H1 (cell line): ENCODE measurements at regions of chr6 and their contacts with region 1.

Region 1: DNA sequence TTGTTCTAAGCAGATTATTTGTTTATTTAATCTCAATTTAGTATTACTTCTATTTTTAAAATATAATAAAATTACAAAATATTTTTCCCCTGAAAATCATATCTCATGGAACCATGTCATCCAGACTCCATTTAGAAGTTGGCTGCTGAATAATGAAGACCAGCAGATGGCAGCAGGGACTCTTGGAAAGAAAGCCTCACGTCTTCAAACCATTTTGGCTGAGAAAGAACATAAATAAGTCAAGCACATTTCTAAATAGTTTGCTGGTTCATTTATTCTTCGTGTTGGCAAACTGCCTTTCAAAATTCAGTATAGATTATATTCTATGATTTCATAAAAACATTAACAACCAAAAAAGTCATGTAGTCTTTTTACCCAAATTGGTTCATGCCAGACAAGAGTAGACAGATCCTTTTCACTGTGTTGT is 71.7 kb downstream of the RCAN2 start:
- DNase-seq: peak in 1 of 2 experiments; percentile 52
- H3K4me3 ChIP-seq: no peak overlapping the region
- H3K27ac ChIP-seq: no peak overlapping the region
- H3K4me1 ChIP-seq: no peaks in the 10 kb centered on the region
- H3K27me3 ChIP-seq: no peaks in the 10 kb centered on the region
- CTCF ChIP-seq: peak in 2 of 3 experiments; percentile 61 to 81; a peak in 3 of 4 replicates
- EP300 ChIP-seq: no peak
- POLR2A ChIP-seq: no peak
- RAD21 ChIP-seq: peak; percentile 91 to 92

Region 2: DNA sequence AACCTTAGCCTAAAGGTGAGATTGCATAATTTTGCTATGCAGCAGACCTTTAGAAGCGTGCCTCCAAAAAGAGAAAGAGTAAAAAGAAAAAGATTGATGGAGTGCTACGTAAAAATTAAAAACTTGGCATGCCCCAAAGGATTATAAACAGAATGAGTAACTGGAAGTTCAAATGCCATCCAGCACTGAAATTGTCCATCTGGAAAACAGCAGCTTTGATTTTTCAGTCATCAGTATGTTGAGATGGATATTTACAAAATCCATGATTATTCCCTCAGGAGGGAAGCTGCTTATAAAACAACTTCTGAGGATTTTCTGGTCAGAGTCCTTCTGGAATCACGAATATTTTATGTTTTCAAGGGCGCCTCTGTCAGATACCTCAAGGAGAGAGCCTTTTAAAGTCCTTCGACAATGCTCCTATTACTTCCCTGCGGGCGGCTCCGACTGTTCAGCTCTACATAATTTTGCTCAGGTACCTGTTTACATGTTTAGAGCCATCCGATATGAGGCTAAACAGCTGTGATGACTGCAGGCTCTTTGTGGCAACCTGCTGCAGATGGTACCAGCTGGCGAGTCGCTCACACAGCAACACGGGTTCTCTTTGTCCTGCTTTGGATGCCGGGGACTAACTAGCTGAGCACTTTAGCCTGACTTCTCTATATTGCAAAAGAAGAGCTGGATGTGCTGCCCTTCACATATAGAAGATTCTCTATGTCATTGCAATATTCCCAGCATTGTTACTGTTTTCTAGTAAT is 11.6 kb before region 1 on chr6:
- CTCF ChIA-PET with region 1: interaction called, 16 read pairs
- POLR2A ChIA-PET with region 1: no interaction called
- DNase-seq: no peak
- H3K4me3 ChIP-seq: no peak overlapping the region
- H3K27ac ChIP-seq: no peak overlapping the region
- H3K4me1 ChIP-seq: no peaks in the 10 kb centered on the region
- H3K27me3 ChIP-seq: no peaks in the 10 kb centered on the region
- CTCF ChIP-seq: no peak
- EP300 ChIP-seq: no peak
- POLR2A ChIP-seq: no peak
- RAD21 ChIP-seq: no peak

Region 3: DNA sequence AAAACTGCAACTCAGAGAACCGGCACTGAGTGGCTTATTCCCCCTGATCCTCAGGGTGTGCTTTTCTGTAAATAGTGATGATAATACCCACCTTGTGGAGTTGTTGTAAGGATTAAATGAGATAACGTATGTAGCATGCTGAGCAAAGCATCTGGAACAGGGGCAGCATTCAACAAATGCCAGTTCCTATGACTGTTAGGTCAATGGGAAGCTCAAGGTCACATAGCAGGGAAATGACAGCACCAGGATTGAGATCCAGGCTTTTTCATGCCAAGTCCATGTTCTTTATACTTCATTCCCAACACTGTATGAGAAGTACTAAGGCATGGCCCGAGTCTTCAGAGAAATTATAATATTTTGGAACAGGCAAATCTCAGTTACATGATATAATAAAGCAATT is 66.6 kb after region 1 on chr6:
- CTCF ChIA-PET with region 1: interaction called, 12 read pairs
- POLR2A ChIA-PET with region 1: no interaction called
- DNase-seq: no peak
- H3K4me3 ChIP-seq: no peak overlapping the region
- H3K27ac ChIP-seq: no peak overlapping the region
- H3K4me1 ChIP-seq: peaks cover 0 to 6% (median 3%) of the 10 kb centered on the region in 4 experiments; a peak in 4 of 7 replicates
- H3K27me3 ChIP-seq: 0 out of 7 replicates have a peak, but pooled peaks cover 0 to 3% (median 0%) of the 10 kb centered on the region in 4 experiments
- CTCF ChIP-seq: no peak
- EP300 ChIP-seq: no peak
- POLR2A ChIP-seq: no peak
- RAD21 ChIP-seq: no peak

Region 4: GRCh38 chr6:46491628-46492547 is 72.3 kb after region 1 on chr6:
- CTCF ChIA-PET with region 1: interaction called, 12 read pairs
- POLR2A ChIA-PET with region 1: no interaction called
- DNase-seq: peak in 1 of 2 experiments; percentile 74
- H3K4me3 ChIP-seq: peak overlapping the region; percentile 55 to 94 (median 69)
- H3K27ac ChIP-seq: no peak overlapping the region
- H3K4me1 ChIP-seq: peaks cover 2 to 6% (median 5%) of the 10 kb centered on the region in 4 experiments; a peak in 5 of 7 replicates
- H3K27me3 ChIP-seq: 0 out of 7 replicates have a peak, but pooled peaks cover 0 to 3% (median 0%) of the 10 kb centered on the region in 4 experiments
- CTCF ChIP-seq: peak; percentile 50 to 66 (median 62)
- EP300 ChIP-seq: no peak
- POLR2A ChIP-seq: no peak; a peak in 1 of 3 replicates
- RAD21 ChIP-seq: peak; percentile 57 to 73